ENCODE measurements at regions of chr13 and their contacts with region 1.

Region 1: DNA sequence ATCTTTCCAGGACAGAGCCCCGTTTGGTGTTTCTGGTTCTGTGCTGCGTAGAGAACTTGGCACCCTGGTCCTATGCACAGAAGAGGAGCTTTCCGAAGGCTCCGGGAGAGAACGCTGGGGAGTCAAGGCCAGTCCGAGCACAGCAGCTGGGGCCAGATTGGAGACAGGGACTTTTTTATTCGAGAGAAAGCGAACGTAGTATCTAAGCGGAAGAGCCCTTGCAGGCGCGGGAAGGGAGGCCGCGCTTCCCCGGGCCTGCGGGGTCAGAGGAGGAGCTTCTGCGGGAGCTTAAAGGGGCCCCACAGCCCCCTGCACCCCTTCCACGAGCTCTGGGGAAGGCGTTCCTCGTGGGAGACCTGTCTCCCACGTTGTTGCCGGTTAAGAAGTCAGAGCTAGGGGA is 48.6 kb upstream of the ARHGEF7 start:
- DNase-seq: no peak
- H3K4me3 Mint-ChIP-seq: peak overlapping the region; percentile 12
- H3K27ac Mint-ChIP-seq: no peak overlapping the region
- H3K4me1 Mint-ChIP-seq: peaks cover 10% of the 10 kb centered on the region
- H3K27me3 Mint-ChIP-seq: peaks cover 56% of the 10 kb centered on the region

Region 2: DNA sequence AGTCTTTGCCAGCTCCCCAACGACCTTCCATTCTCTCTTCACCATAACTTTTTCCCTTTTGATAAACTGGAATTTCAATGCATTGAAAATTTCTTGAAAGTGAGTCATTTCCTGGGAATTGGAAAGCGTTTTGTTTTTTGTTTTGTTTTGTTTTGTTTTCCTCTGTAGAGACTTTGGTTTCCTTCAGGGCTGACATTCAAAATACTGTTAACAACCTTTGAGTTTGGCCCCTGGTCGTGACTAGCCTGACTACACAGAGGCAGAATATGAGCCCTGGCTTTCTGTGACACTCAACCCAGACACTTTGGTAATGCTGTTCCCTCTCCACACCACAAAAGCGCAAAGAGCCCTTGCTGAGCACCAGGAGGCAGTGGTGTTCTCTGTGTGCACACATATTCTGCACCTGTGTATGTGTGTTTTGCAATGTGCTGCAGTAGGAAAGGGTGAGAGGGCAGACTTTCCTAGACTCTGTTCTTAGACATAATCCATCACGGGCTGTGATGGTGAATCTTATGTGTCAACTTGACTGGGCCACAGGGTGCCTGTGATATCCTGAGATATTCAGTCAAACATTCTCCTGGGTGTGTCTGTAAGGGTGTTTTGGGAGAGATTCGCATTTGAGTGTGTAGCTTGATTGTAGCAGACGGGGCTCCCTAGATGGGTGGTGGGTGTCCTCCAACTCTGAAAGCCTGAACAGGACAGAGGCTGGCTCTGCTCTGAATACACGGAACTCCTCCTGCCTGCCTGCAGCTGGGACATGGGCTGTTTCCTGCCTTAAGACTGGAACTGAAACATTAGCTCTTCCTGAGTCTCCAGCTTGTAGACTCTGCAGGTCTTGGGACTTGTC is 122.2 kb before region 1 on chr13:
- CTCF ChIA-PET with region 1: interaction called, 29 read pairs
- POLR2A ChIA-PET with region 1: no interaction called
- DNase-seq: peak; percentile 70
- H3K4me3 Mint-ChIP-seq: no peak overlapping the region
- H3K27ac Mint-ChIP-seq: no peak overlapping the region
- H3K4me1 Mint-ChIP-seq: peaks cover 23% of the 10 kb centered on the region
- H3K27me3 Mint-ChIP-seq: peaks cover 6% of the 10 kb centered on the region

Region 3: DNA sequence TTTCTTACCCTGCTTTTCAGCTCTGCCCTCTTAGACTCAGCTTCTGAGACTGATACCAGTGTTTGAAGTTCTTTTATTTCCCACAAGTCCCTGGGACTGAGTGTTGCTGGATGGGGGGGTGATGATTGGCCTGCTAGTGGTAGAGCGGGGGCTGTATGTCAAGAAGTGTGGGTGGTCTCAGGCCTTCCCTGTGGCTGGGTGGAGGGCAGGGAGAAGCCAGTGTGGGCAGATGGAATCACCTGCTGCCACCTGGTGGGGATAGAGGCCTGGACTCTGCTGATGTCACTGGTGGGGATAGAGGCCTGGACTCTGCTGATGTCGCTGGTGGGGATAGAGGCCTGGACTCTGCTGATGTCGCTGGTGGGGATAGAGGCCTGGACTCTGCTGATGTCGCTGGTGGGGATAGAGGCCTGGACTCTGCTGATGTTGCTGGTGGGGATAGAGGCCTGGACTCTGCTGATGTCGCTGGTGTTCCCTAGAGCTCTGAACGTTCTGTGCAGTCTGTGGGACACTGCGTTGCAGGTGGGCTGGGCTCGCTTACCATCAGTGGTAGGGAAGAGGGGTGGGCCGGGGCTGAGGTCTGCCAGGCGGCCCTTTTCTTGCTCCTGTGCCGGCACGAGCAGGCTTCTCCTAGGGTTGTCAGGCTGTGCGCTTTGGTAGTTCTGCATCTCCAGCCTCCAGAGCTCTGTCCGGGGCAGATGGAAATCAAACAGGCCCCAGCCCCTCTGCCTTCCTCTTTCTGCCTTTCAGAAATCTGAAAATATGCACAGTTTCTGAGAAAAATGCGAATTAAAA is 149.8 kb after region 1 on chr13:
- CTCF ChIA-PET with region 1: interaction called, 43 read pairs
- POLR2A ChIA-PET with region 1: no interaction called
- DNase-seq: peak; percentile 41
- H3K4me3 Mint-ChIP-seq: no peak overlapping the region
- H3K27ac Mint-ChIP-seq: no peak overlapping the region
- H3K4me1 Mint-ChIP-seq: peaks cover 2% of the 10 kb centered on the region
- H3K27me3 Mint-ChIP-seq: no peaks in the 10 kb centered on the region

Region 4: GRCh38 chr13:111403266-111403665 is 336.7 kb after region 1 on chr13:
- CTCF ChIA-PET with region 1: interaction called, 10 read pairs
- POLR2A ChIA-PET with region 1: no interaction called
- DNase-seq: no peak
- H3K4me3 Mint-ChIP-seq: no peak overlapping the region
- H3K27ac Mint-ChIP-seq: no peak overlapping the region
- H3K4me1 Mint-ChIP-seq: no peaks in the 10 kb centered on the region
- H3K27me3 Mint-ChIP-seq: no peaks in the 10 kb centered on the region